Activated CD4-positive, alpha-beta T cell treated with anti-CD3 and anti-CD28 coated beads, Interleukin-2, amount 10 ng/mL, durations not matched to agents 24 days and 14 days (primary cell): ENCODE measurements at regions of chr3 and their contacts with region 1.

Region 1: DNA sequence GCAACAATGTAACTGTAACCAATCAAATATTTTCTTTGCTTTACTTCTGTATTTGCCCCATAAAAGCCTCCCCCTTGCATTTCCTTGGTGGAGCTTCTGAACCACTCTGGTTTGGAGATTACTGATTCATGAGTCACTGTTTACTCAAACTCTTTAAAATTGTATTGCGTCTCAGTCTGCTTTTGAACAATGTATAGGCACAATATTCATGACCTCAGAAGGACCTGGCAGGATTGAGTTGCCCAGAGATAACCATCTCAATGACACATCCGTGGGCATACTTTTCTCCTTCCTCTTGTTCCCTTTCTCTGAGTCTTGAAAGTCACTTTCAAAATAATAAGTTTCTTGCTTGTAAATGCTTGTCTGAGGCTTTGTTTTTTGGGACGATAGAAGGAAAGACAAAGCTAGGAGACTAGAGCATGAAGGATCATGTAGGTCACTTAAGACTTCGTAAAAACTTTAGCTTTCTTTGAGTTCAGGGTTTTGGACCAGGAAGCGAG is 57.1 kb upstream of the POU1F1 start:
- DNase-seq: peak; percentile 61
- H3K4me3 Mint-ChIP-seq: peak overlapping the region; percentile 46
- H3K27ac Mint-ChIP-seq: peak overlapping the region; percentile 90
- H3K4me1 Mint-ChIP-seq: peaks cover 16% of the 10 kb centered on the region
- H3K27me3 Mint-ChIP-seq: no peaks in the 10 kb centered on the region

Region 2: GRCh38 chr3:87120881-87121280 is 212.6 kb before region 1 on chr3:
- intact Hi-C with region 1: no loop called
- DNase-seq: no peak
- H3K4me3 Mint-ChIP-seq: no peak overlapping the region
- H3K27ac Mint-ChIP-seq: no peak overlapping the region
- H3K4me1 Mint-ChIP-seq: no peaks in the 10 kb centered on the region
- H3K27me3 Mint-ChIP-seq: no peaks in the 10 kb centered on the region

Region 3: DNA sequence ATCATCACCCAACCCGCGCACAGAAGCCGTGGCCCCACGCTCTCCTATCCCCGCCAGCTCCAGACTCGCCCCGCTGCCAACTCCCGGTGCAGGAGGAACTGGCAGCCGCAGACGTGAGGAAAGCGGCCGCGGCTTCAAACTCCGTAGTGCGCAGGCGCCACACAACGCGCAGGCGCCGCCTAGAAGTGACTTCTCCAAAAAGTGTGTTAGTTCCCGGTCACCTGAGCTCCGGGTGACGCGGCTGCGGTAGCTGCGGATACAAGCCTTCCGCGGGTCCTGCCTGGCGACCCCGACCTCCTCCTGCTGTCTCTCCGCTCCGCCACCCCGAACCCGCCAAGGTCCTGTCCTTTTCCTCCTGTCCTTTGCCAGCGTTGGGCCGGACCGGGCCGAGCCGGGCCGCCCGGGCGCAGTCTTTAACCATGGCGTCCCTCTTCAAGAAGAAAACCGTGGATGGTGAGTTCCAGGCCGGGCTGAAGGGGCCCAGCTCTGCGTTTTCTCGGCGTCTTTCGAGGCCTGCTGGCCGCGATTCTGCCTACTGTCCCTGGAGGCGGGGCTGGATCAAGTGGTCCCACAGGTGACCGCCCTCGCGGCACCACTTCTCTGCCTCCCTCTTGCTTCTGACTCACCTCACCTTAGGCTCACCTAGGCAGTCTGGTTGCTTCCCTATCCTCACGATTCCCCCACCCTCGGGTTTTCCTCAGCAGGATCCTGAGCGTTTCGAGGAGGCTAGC is 106.2 kb before region 1 on chr3 and contains the start of gene CHMP2B:
- intact Hi-C with region 1: loop called (anchors 1 kb)
- DNase-seq: peak; percentile 97
- H3K4me3 Mint-ChIP-seq: peak within 1 kb of the TSS; percentile 100
- H3K27ac Mint-ChIP-seq: peak within 1 kb of the TSS; percentile 98
- H3K4me1 Mint-ChIP-seq: peaks cover 33% of the 10 kb centered on the region
- H3K27me3 Mint-ChIP-seq: peaks cover 25% of the 10 kb centered on the region
- total RNA-seq, gene CHMP2B: 25.3 and 27.2 TPM in 2 replicates

Region 4: GRCh38 chr3:87272718-87273341 is 60.6 kb before region 1 on chr3:
- intact Hi-C with region 1: loop called (anchors 5 kb)
- DNase-seq: no peak
- H3K4me3 Mint-ChIP-seq: no peak overlapping the region
- H3K27ac Mint-ChIP-seq: no peak overlapping the region
- H3K4me1 Mint-ChIP-seq: peaks cover 37% of the 10 kb centered on the region
- H3K27me3 Mint-ChIP-seq: peaks cover 2% of the 10 kb centered on the region

Region 5: GRCh38 chr3:87298111-87298718 is 35.2 kb before region 1 on chr3:
- intact Hi-C with region 1: loop called (anchors 5 kb)
- DNase-seq: no peak
- H3K4me3 Mint-ChIP-seq: no peak overlapping the region
- H3K27ac Mint-ChIP-seq: no peak overlapping the region
- H3K4me1 Mint-ChIP-seq: no peaks in the 10 kb centered on the region
- H3K27me3 Mint-ChIP-seq: peaks cover 2% of the 10 kb centered on the region

Region 6: GRCh38 chr3:87311309-87311708 is 22.1 kb before region 1 on chr3:
- intact Hi-C with region 1: loop called (anchors 1 kb)
- DNase-seq: no peak
- H3K4me3 Mint-ChIP-seq: no peak overlapping the region
- H3K27ac Mint-ChIP-seq: peak overlapping the region; percentile 1
- H3K4me1 Mint-ChIP-seq: peaks cover 4% of the 10 kb centered on the region
- H3K27me3 Mint-ChIP-seq: no peaks in the 10 kb centered on the region